ENCODE measurements at regions of chr1 and their contacts with region 1.

Region 1: GRCh38 chr1:95096218-95096841 is 20.8 kb upstream of the TLCD4 start:
- DNase-seq: no peak
- H3K27ac ChIP-seq: no peak overlapping the region
- CTCF ChIP-seq: no peak

Region 2: GRCh38 chr1:95057351-95057750 is 39.0 kb before region 1 on chr1:
- CTCF ChIA-PET with region 1: interaction called, 10 read pairs
- POLR2A ChIA-PET with region 1: no interaction called
- DNase-seq: no peak
- H3K27ac ChIP-seq: no peak overlapping the region
- CTCF ChIP-seq: no peak